ACHN (cell line): ENCODE measurements at regions of chr7 and their contacts with region 1.

Region 1: DNA sequence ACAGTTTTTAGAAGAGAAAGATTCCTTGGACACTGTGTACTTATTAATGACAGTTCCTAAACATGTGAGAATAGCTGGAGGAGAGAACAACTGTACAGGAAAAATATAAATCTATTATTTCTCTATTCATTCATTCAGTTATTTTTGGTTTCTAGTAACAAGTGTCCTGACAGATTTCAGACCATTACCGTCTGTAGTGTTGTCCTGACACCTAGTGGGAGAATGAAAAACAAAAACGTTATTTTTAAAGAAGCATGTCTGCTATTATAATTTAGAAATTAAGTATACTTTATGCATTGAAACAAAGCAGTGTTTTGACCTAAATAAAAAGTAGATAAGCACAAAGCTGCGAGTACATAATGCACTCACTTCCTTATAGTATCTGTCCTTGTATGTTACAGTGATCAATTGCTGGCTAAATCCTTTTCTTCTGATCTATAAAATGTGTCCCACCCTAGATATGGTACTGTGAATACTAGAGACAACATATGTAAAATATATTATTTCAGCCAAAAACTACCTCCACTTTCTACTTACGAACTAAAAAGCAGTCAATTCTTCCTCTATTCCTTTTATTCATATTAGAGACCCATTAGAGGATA is 575.6 kb downstream of the ARL4A start:
- DNase-seq: peak; percentile 73

Region 2: DNA sequence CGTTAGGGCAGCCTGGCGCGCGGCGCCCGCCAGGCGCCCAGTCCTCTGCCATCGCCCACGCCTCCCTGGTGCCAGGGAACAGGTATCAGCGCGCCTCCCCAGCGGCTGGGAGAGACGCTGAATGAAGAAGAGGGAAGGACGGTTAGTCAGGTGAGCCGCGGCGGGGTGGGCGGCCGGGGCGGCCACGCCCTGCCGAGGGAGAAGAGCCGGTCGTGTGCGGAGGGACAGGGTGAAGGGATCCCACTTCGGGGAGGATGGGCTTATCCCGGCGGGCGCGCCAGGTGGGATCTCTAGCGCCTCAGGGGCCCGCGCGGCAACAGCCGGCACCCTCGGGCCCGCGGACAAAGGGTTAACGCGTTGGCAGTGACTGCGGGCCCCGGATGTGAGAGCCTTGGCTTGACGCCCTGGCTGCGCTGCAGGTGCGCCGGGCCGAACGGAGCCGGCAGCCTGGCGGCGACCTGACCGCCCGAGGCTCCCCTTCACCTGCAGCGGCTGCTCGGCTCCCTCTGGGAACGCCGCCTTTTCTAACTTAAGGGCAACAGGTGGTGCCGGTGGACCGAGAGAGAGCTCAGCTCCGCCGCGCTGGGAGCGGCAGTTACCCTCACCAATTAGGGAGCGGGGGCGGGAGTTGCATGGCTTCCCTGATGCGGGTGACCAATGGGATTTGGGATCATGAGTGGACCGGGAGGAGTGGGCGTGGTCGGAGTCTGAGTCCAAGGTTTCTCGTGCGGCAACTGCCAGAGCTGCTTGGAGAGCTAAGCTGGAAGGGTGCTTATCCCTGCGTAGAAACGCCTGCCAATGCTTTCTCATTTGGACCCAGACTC is 575.9 kb before region 1 on chr7 and contains the start of gene ARL4A:
- in situ Hi-C with region 1: loop called (anchors 25 kb)
- DNase-seq: peak; percentile 100